ENCODE measurements at regions of chr10 and their contacts with region 1.

Region 1: DNA sequence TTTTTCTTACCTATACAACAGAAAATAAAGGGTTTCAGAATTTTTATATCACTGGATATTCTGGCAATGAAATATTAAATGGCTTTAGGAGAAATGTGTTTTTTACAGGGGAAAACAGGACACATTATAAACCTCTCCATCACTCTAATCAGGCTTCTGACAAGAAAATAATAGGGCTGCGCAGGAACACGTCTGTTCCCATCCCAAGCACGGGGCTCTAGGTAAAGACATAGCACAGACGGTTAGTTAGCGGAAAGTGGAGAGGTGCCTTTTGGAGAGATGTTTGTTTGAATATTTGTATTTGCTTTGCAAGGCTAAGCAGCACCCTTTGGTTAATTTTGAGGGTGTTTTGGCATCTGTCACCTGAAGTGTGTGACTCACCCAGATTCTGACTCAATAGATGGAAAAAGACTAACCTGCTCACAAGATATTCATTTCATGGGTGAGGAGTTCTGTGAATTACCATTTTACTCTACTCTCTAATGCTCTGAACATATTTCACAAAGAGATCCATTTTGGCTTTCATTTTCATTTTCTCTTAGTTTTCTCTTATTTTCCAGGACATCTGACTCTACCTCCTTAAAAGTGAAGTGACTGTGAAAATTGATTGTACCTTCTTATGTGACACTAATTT is 174.5 kb upstream of the AKR1E2 start:
- DNase-seq: peak; percentile 34
- H3K4me3 Mint-ChIP-seq: peak overlapping the region; percentile 62
- H3K27ac Mint-ChIP-seq: peak overlapping the region; percentile 96
- H3K4me1 Mint-ChIP-seq: peaks cover 32% of the 10 kb centered on the region
- H3K27me3 Mint-ChIP-seq: no peaks in the 10 kb centered on the region

Region 2: GRCh38 chr10:2813286-2813685 is 1838.2 kb before region 1 on chr10:
- CTCF ChIA-PET with region 1: no interaction called
- POLR2A ChIA-PET with region 1: no interaction called
- intact Hi-C with region 1: no loop called
- DNase-seq: no peak
- H3K4me3 Mint-ChIP-seq: no peak overlapping the region
- H3K27ac Mint-ChIP-seq: no peak overlapping the region
- H3K4me1 Mint-ChIP-seq: no peaks in the 10 kb centered on the region
- H3K27me3 Mint-ChIP-seq: no peaks in the 10 kb centered on the region

Region 3: DNA sequence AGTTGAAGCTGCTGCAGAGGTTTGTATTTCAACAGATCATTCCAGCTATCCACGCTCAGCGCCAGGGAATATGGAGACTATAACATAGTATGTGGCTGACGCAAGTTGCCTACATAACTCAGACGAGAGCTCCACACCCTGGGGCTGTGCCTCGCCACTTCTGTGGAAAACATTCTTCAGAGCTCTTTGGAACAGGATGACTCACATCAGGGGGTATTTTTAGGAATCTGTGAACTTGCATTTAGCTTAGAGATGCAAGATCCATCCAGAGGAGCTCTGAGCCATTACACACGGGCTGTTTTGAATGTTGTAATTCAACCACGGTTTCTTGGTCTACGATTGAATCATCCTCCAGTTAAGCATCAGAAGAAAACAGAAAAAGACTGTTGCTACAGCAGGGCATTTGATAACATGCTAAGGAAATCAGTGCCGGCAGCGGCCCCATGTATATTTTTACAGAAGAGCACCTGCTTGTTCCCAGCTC is 307.0 kb before region 1 on chr10:
- CTCF ChIA-PET with region 1: no interaction called
- POLR2A ChIA-PET with region 1: no interaction called
- intact Hi-C with region 1: loop called (anchors 1 kb)
- DNase-seq: peak; percentile 70
- H3K4me3 Mint-ChIP-seq: no peak overlapping the region
- H3K27ac Mint-ChIP-seq: peak overlapping the region; percentile 30
- H3K4me1 Mint-ChIP-seq: peaks cover 23% of the 10 kb centered on the region
- H3K27me3 Mint-ChIP-seq: no peaks in the 10 kb centered on the region

Region 4: GRCh38 chr10:4546500-4546899 is 105.0 kb before region 1 on chr10:
- CTCF ChIA-PET with region 1: no interaction called
- POLR2A ChIA-PET with region 1: no interaction called
- intact Hi-C with region 1: loop called (anchors 1 kb)
- DNase-seq: peak; percentile 66
- H3K4me3 Mint-ChIP-seq: no peak overlapping the region
- H3K27ac Mint-ChIP-seq: no peak overlapping the region
- H3K4me1 Mint-ChIP-seq: peaks cover 8% of the 10 kb centered on the region
- H3K27me3 Mint-ChIP-seq: peaks cover 2% of the 10 kb centered on the region

Region 5: DNA sequence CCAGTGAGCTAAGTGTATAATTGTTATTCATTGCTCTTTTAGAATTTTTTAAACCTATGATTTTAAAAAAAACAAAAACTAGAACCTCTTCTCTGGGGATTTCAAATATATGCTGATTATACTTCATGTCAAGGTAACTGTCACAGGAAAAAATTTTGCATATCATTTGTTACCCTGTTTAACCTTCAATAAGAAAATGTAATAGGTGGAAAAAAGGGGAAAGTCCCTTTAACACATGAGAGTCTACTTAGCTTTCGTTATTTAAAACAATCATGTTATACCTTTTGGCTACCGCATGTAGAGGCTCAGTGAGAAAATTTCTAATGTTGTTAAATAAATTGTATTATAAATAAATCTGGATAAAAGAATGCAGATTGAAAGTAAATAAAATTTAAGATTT is 15.6 kb before region 1 on chr10:
- CTCF ChIA-PET with region 1: no interaction called
- POLR2A ChIA-PET with region 1: no interaction called
- intact Hi-C with region 1: loop called (anchors 1 kb)
- DNase-seq: no peak
- H3K4me3 Mint-ChIP-seq: no peak overlapping the region
- H3K27ac Mint-ChIP-seq: no peak overlapping the region
- H3K4me1 Mint-ChIP-seq: peaks cover 3% of the 10 kb centered on the region
- H3K27me3 Mint-ChIP-seq: no peaks in the 10 kb centered on the region

Region 6: GRCh38 chr10:4802706-4803487 is 151.4 kb after region 1 on chr10:
- CTCF ChIA-PET with region 1: no interaction called
- POLR2A ChIA-PET with region 1: no interaction called
- intact Hi-C with region 1: no loop called
- DNase-seq: no peak
- H3K4me3 Mint-ChIP-seq: no peak overlapping the region
- H3K27ac Mint-ChIP-seq: no peak overlapping the region
- H3K4me1 Mint-ChIP-seq: no peaks in the 10 kb centered on the region
- H3K27me3 Mint-ChIP-seq: peaks cover 5% of the 10 kb centered on the region